ENCODE measurements at regions of chr10 and their contacts with region 1.

Region 1: GRCh38 chr10:117174439-117175214 is 22.7 kb upstream of the KCNK18 start:
- DNase-seq: peak; percentile 76
- ATAC-seq: peak; percentile 97

Region 2: GRCh38 chr10:116683821-116684220 is 490.8 kb before region 1 on chr10:
- intact Hi-C with region 1: loop called (anchors 5 kb)
- DNase-seq: no peak
- ATAC-seq: no peak

Region 3: DNA sequence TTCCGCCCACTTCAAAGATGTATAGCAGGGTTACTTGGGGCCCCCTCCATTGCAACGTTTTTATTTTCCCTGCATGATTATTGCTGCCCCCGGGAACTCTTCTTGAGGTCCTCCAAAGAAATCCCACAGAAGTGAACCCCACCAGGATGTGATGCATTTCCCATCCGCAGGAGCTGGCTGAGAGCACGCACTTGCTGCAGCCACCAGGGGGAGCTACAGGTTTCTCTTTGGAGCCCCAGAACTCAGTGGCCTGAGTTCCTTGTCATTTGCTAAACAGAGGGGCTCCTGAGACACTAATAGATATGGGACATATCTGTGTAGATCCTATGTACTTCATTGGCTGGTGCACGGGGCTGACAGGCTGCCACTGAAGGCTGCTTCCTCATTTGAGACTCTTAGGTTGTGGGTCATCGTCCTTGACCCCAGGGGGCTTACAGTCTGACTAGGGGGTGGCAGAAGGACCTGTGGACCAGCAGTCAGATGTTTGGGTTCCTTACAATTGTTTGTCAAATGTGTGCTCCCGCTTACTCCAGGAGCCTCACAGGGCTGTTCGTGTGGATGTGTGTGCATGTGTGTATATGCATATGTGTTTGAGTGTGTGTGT is 377.6 kb before region 1 on chr10:
- intact Hi-C with region 1: loop called (anchors 2 kb)
- DNase-seq: peak; percentile 76
- ATAC-seq: peak; percentile 87

Region 4: GRCh38 chr10:116857156-116857555 is 317.5 kb before region 1 on chr10:
- intact Hi-C with region 1: no loop called
- DNase-seq: no peak
- ATAC-seq: no peak

Region 5: DNA sequence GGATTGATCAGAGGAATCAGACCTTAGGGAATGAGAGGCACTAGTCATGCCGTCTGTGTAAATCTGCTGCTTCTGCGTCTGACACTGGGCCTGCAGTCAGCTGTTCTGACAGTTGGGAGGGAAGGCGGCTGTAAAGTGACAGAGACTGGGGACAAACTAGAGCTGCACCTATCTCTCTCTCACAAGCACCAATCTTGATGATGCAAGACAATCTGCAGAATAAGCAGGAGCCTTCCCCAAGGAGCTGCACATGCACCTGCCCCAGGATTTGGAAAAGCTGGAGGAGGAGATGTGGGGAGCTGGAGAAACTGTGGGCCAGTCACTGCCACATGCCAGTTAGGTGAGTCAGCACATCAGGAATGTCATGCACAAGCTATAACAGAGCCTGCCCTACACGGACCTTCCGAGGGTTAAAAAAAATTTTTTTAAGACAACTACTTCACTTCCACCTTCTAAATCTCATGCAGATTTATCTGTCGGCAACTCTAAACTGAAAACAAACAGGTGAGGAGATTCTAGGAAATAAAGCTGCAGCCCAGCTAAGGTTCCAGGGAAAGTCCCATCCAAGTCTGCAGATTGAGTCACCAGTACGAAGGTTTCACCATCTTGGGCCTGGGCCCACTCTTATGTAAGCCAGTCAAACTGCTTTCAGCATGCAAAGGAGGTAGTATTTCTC is 286.1 kb before region 1 on chr10:
- intact Hi-C with region 1: no loop called
- DNase-seq: peak; percentile 55
- ATAC-seq: peak; percentile 75

Measured in Right ventricle myocardium superior (tissue), 1 donor.